Left ventricle myocardium superior (tissue), 1 donor: ENCODE measurements at regions of chr1 and their contacts with region 1.

Region 1: DNA sequence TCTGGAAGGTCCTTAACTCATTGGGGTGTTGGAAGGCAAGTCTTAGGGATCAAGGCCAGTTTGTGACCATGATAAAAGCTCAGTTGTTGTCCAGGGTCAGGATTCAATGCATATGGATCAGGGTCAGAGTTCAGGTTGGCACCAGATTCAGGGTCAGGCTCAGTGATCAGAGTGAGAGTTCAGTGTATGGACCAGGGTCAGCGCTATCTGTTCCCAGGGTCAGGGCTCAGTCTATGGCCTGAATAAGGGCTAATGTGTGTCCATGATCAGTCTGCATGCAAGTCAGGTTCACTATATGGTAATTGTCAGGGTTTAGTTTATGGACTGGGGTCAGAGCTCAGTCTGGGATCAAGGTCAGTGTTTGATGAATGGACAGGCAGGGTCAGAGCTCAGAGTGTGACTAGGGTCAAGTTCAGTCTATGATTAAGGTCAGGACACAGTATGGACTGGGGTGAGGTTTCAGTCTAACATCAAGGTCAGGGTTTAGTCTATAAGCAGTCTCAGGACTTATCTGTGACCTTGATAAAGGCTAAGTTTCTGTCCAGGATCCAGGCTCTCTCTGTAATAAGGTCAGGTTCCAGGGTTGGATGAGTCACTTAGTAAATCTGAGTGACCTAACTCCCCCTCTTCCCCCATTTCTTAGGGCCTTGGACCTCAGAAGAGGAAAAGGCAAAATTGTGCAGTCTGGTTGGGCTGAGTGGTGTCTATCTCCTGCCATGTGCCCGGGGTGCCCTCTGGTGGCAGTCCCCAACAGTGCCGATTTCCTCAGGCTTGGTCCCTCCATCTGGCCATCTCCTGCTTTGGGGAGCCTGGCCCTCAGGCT is 23.8 kb downstream of the KNCN start:
- DNase-seq: peak; percentile 90
- ATAC-seq: peak; percentile 83

Region 2: GRCh38 chr1:46406881-46407608 is 120.6 kb before region 1 on chr1:
- intact Hi-C with region 1: loop called (anchors 5 kb)
- DNase-seq: no peak
- ATAC-seq: no peak

Region 3: GRCh38 chr1:46446646-46447498 is 80.8 kb before region 1 on chr1:
- intact Hi-C with region 1: loop called (anchors 5 kb)
- DNase-seq: peak; percentile 87
- ATAC-seq: peak; percentile 72

Region 4: DNA sequence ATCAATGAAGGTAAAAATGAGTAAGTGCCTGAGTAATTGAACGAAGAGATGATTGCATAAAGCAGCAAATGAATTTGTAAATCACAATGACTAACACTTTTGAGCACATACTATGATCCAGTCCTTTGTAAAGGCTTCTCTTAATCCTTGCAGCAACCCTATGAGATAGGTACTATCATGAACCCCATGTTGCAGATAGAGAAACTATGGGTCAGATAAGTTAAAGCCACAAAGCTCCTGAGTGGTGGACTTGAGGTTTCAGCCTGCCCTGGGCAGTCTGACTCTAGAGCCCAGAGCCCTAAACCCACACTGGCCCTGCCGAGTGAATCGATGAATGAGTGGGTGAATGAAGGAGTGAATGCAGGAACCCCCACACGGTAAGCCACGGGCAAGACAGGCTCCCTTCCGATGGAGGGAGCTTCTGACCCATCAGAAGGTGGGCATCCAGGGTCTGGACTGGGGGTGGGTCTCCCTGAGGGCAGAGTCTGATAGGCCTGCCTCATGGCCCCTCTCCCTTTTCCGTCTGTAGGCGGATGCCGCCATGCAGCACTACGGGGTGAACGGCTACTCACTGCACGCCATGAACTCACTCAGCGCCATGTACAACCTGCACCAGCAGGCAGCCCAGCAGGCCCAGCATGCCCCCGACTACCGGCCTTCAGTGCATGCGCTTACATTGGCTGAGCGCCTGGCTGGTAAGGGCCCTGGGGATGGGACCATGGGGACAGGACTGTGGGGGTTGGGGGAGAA is 21.0 kb before region 1 on chr1:
- intact Hi-C with region 1: no loop called
- DNase-seq: no peak
- ATAC-seq: no peak

Region 5: DNA sequence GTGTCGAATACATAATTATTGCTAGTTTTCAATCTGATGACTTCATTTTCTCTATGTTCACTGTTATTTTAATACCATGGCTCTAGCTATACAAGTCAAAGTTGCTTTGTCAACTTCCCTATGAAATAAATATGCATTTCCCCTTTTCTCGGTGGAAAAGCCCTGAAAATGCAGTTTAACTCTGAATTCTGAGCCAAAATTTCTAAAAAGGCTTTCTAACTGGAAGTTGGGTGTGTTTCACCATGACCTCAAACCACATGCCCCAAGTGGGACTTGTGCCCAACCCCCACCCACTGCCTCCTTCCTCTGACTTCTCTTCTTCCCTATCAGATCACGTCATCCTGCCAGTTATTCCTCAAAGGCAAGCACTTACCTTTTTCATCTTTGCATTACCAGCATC is 67.4 kb after region 1 on chr1:
- intact Hi-C with region 1: no loop called
- DNase-seq: peak; percentile 80
- ATAC-seq: peak; percentile 74

Region 6: DNA sequence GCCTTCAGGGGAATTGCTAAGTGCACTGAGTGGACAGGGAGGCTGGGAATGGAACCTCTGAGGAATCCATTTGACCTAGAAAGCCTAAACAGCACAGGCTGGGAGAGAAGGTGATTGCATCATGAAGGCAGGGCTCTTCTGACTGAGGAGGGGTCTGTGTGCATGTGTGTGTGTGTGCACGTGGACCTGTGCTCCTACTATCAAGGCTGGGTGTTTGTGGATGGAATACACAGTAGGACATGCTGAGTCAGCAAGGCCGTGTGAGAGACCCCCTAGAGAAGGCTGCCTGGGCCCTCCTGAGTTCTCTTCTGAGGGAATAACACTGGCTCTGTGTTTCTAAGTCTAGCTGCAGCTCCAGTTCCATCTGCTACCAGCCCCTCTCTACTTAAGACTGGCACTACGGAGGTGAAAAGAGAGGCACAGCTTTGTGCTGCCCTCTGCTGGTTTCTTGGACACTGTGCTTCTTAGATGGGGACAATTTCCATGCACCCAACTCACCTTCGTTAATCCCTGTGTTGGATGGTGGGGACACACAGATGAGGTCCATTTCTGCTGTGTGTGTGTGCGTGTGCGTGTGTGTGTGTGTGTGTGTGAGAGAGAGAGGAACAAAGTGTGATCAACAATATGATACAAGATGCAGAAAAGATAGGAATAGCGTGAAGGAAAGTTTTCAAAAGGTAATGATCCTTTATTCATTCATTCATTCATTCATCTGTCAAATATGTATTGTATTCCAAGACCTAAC is 197.5 kb after region 1 on chr1:
- intact Hi-C with region 1: loop called (anchors 10 kb)
- DNase-seq: peak; percentile 52
- ATAC-seq: peak; percentile 96